ENCODE measurements at regions of chr3 and their contacts with region 1.

Region 1: GRCh38 chr3:138332472-138333076 is 2.9 kb upstream of the NME9 start:
- DNase-seq: no peak
- H3K4me3 ChIP-seq: no peak overlapping the region
- H3K27ac ChIP-seq: peak overlapping the region in 6 of 59 donors; percentile 1 to 51 (median 22)
- H3K27me3 ChIP-seq: no peaks in the 10 kb centered on the region
- CTCF ChIP-seq: peak; percentile 53 to 89 (median 76)

Region 2: GRCh38 chr3:138186803-138187295 is 145.7 kb before region 1 on chr3:
- intact Hi-C with region 1: loop called in 1 of 2 experiments (anchors 5 kb)
- DNase-seq: peak; percentile 83 to 92 (median 88)
- H3K4me3 ChIP-seq: peak overlapping the region; percentile 61 to 99 (median 91)
- H3K27ac ChIP-seq: peak overlapping the region in 58 of 59 donors; percentile 83 to 99 (median 94)
- H3K27me3 ChIP-seq: no peaks in the 10 kb centered on the region
- CTCF ChIP-seq: peak in 4 of 56 donors; percentile 14 to 57 (median 37)

Region 3: DNA sequence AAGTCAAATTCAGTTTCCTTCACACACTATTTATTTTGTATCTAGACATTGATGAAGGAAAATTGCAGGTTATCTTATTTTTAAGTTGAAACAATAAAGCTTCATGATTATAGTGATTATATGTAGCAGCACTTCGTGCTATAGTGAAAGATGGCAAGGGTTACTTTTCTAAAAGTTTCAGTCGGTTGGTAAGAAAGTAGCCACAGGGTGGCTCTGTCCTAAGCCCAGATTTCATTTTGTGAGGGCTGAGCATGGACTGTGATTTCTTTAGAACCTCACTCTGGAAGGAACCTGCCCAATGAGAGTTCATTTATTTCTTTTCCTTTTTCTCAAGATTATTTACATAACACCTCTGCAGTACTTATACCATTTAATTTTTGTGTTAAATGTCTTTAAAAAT is 69.5 kb before region 1 on chr3:
- intact Hi-C with region 1: loop called in 1 of 2 experiments (anchors 5 kb)
- DNase-seq: no peak
- H3K4me3 ChIP-seq: no peak overlapping the region
- H3K27ac ChIP-seq: no peak overlapping the region
- H3K27me3 ChIP-seq: no peaks in the 10 kb centered on the region
- CTCF ChIP-seq: peak in 43 of 56 donors; percentile 13 to 59 (median 37)

Region 4: DNA sequence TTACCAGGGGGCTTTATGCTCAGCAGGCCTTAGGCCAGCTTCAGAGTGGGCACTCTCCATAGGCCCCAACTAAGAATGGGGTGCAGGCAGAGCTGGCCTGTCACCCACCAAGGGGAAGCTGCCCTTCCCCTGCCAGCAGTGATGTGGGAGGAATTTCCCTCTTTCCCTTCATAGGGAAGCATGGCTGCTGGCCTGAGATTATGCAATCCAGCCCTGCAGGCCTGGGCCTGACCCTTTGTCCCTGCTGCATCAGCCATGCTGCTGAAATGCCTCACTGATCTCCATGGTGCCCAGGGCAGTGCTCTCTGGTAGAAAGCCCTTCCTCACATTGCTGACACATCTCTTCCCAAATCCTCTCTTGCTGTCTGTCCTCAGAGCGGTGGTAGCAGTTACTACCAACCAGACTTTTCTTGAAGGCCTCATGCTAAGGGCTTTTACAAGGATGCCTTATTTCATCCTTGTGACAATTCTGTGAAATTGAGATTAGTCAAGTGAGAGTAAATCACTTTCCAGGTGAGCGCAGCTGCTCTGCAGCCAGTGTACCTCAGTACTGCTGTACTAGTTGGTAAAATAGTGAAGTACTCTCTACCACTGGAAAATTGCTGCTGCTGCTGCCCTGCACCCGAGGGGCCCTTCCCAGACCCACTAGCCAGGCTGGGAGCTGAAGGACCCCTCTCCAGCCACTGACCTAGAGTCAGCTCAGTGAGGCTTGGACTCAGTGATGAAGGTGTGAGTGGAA is 49.5 kb after region 1 on chr3:
- intact Hi-C with region 1: loop called in 1 of 2 experiments (anchors 5 kb)
- DNase-seq: peak in 5 of 10 donors; percentile 53 to 70 (median 62)
- H3K4me3 ChIP-seq: peak overlapping the region in 8 of 59 donors; percentile 1 to 39 (median 12)
- H3K27ac ChIP-seq: peak overlapping the region; percentile 52 to 99 (median 94)
- H3K27me3 ChIP-seq: no peaks in the 10 kb centered on the region
- CTCF ChIP-seq: peak in 1 of 56 donors; percentile 16

Region 5: DNA sequence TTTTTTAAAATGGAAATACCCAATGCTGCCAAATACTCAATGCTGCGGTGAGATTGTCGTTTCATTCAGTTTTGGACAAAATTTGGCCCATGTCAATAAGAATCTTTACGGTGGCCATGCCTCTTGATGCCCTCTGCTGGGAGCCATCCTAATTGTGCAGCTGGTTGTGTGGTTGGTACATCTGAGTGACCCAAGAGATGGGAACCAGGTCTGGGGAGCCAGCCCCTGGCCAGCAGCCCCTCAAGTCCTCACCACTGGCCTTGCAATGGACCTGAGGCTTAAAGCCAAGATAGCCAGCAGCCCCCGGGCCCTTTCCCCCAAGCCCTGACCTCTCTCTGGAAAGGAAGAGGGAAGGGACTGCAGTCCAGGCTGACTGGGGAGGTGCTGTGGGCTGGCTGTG is 65.4 kb after region 1 on chr3:
- intact Hi-C with region 1: loop called in 1 of 2 experiments (anchors 5 kb)
- DNase-seq: peak in 1 of 10 donors; percentile 59
- H3K4me3 ChIP-seq: no peak overlapping the region
- H3K27ac ChIP-seq: peak overlapping the region in 7 of 59 donors; percentile 1 to 70 (median 22)
- H3K27me3 ChIP-seq: no peaks in the 10 kb centered on the region
- CTCF ChIP-seq: peak in 52 of 56 donors; percentile 18 to 72 (median 48)

Region 6: GRCh38 chr3:138408751-138409161 is 76.2 kb after region 1 on chr3:
- intact Hi-C with region 1: loop called in 1 of 2 experiments (anchors 5 kb)
- DNase-seq: peak in 9 of 10 donors; percentile 9 to 85 (median 60)
- H3K4me3 ChIP-seq: no peak overlapping the region
- H3K27ac ChIP-seq: peak overlapping the region in 51 of 59 donors; percentile 2 to 89 (median 56)
- H3K27me3 ChIP-seq: no peaks in the 10 kb centered on the region
- CTCF ChIP-seq: no peak

Measured in dorsolateral prefrontal cortex (tissue), 120 donors.